Activated naive CD4-positive, alpha-beta T cell treated with anti-CD3 and anti-CD28 coated beads, Interleukin-2, amount 10 ng/mL, durations not matched to agents 7 days and 5 days (primary cell): ENCODE measurements at regions of chr12 and their contacts with region 1.

Region 1: GRCh38 chr12:113232840-113233585 is 11.7 kb downstream of the TPCN1 start:
- DNase-seq: peak; percentile 81
- H3K4me3 Mint-ChIP-seq: peak overlapping the region; percentile 49
- H3K27ac Mint-ChIP-seq: peak overlapping the region; percentile 81
- H3K4me1 Mint-ChIP-seq: peaks cover 59% of the 10 kb centered on the region
- H3K27me3 Mint-ChIP-seq: no peaks in the 10 kb centered on the region

Region 2: DNA sequence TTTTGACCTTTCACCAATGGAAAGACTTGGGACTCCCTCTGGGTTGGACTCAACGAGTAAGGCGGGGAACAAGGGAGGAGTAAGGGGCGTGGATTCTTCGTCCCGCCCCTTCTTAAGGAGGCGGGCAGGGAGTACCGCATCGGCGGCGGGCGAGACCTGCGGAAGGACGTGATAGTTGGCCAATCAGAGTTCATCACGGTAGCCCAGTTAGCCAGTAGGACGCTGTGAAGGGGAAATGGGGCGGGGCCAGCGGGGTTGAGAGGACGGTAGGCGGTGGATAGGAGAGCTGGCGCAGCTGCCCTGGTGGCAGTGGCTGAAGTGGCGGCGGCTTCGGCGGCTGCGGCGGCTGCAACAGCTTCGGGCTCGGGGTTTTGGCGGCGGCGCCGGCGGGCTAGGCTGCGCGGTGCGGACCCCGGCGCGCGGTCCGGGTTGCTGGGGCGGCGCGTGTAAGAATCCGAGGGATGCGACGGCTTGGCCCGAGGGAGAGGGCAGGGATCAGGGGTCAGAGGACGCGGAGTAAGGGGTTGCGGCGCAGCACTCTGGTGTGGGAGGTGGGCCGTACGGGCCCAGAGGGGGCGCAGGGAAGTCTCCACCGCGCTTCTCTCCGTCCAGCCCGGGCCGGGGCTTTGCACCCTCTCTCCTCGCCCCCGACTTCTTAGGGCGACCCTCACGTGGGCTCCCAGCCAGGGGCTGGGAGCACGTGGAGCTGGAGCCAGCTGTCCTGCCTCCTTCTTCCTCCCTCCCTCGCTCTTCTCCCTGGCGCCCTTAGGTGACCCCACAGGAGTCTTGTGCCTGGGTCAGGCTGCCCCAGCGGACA is 11.6 kb before region 1 on chr12 and contains the start of gene TPCN1:
- CTCF ChIA-PET with region 1: interaction called, 20 read pairs
- DNase-seq: peak; percentile 100
- H3K4me3 Mint-ChIP-seq: peak within 1 kb of the TSS; percentile 86
- H3K27ac Mint-ChIP-seq: peak within 1 kb of the TSS; percentile 89
- H3K4me1 Mint-ChIP-seq: peaks cover 43% of the 10 kb centered on the region
- H3K27me3 Mint-ChIP-seq: no peaks in the 10 kb centered on the region